ENCODE measurements at regions of chr17 and their contacts with region 1.

Region 1: DNA sequence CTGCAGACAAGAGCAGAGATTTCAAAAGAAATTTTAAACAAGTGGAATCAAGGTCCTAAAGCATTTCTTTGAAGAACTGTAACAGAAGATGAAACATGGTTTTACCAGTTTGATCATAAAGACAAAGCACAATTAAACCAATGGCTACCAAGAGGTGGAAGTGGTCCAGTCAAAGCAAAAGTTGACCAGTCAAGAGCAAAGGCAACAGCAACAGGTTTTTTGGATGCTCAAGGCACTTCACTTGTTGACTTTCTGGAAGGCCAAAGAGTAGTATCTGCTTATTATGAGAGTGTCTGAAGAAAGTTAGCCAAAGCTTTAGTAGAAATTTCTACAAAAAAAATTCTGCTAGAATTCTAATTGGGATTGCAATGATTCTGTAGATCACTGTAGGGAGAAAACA is 5.3 kb downstream of the DDX52 start:
- DNase-seq: no peak
- ATAC-seq: no peak
- H3K4me3 ChIP-seq: no peak overlapping the region
- H3K27ac ChIP-seq: no peak overlapping the region
- H3K4me1 ChIP-seq: peaks cover 3 to 44% (median 31%) of the 10 kb centered on the region in 9 donors
- H3K27me3 ChIP-seq: no peaks in the 10 kb centered on the region
- CTCF ChIP-seq: no peak

Region 2: GRCh38 chr17:37551788-37552187 is 86.2 kb before region 1 on chr17:
- intact Hi-C with region 1: loop called in 1 of 10 experiments (anchors 10 kb)
- DNase-seq: no peak
- ATAC-seq: no peak
- H3K4me3 ChIP-seq: no peak overlapping the region
- H3K27ac ChIP-seq: peak overlapping the region in 2 of 10 donors; percentile 16 to 46
- H3K4me1 ChIP-seq: peaks cover 2 to 57% (median 40%) of the 10 kb centered on the region in 9 donors
- H3K27me3 ChIP-seq: no peaks in the 10 kb centered on the region
- CTCF ChIP-seq: no peak